MCF 10A (cell line): ENCODE measurements at regions of chr19 and their contacts with region 1.

Region 1: DNA sequence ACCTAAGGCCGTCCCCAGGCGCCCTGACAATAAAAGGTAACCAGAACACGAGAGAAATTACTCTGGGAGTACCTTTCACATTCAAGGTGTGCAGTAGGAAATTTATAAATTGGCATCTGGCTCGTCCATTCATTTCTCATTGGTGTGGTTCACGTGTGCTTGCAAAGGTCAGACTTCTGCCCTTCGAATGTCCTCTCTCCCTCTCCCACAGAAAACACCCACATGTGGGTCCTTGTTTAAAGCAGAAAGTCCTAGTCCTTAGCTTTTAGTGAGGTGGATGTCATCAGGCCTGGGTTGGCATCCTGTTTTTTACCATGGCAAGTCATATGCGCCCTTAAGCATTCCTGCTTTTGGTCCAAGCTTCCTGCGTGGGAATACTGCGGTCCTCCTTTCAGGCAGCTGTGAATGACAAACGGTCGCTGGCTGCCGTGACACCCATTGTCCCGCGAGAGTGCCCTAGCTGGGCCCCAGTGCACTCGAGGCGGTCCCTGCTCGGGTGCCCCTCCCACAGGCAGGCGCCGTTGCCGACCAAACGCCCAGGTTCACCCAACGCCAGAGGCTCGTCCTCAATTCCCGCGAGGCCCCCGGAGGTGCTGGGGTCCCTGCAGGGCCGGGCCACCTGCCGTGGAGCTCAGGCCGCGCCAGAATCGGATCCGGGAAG is at the start of gene NUDT19:
- DNase-seq: peak; percentile 92
- H3K4me3 Mint-ChIP-seq: peak within 1 kb of the TSS; percentile 79
- H3K27ac Mint-ChIP-seq: peak within 1 kb of the TSS; percentile 96
- H3K4me1 Mint-ChIP-seq: peaks cover 37% of the 10 kb centered on the region
- H3K27me3 Mint-ChIP-seq: no peaks in the 10 kb centered on the region
- CTCF ChIP-seq: no peak
- total RNA-seq, gene NUDT19: 29.4 and 33.4 TPM in 2 replicates

Region 2: GRCh38 chr19:32674959-32675719 is 16.3 kb before region 1 on chr19 and contains the start of gene ANKRD27:
- CTCF ChIA-PET with region 1: interaction called, 5 read pairs
- POLR2A ChIA-PET with region 1: interaction called, 24 read pairs
- intact Hi-C with region 1: loop called (anchors 2 kb)
- DNase-seq: peak; percentile 99
- H3K4me3 Mint-ChIP-seq: peak within 1 kb of the TSS; percentile 84
- H3K27ac Mint-ChIP-seq: peak within 1 kb of the TSS; percentile 67
- H3K4me1 Mint-ChIP-seq: peaks cover 11% of the 10 kb centered on the region
- H3K27me3 Mint-ChIP-seq: no peaks in the 10 kb centered on the region
- CTCF ChIP-seq: no peak
- total RNA-seq, gene ANKRD27: 28.4 and 30.1 TPM in 2 replicates

Region 3: DNA sequence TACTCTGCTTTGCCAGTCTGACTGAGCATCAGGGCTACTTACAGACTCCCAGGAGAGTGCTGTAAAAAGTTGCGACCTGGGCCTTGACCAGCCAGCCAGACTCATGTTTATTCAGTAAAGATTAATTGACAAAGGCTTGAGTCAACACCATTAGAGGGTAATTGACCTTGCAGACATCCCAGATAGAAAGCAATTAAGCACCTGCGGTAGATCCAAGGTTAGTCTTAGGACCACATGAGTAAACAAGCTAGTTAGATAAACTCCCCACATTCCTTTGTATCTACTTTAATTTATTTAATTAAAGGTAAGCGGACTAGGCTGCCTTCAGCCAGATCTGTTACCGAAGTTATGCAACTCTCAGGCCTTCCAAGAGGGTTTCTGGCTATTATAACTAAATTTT is 10.7 kb after region 1 on chr19:
- CTCF ChIA-PET with region 1: no interaction called
- POLR2A ChIA-PET with region 1: interaction called, 13 read pairs
- intact Hi-C with region 1: no loop called
- DNase-seq: no peak
- H3K4me3 Mint-ChIP-seq: no peak overlapping the region
- H3K27ac Mint-ChIP-seq: no peak overlapping the region
- H3K4me1 Mint-ChIP-seq: no peaks in the 10 kb centered on the region
- H3K27me3 Mint-ChIP-seq: no peaks in the 10 kb centered on the region
- CTCF ChIP-seq: no peak

Region 4: DNA sequence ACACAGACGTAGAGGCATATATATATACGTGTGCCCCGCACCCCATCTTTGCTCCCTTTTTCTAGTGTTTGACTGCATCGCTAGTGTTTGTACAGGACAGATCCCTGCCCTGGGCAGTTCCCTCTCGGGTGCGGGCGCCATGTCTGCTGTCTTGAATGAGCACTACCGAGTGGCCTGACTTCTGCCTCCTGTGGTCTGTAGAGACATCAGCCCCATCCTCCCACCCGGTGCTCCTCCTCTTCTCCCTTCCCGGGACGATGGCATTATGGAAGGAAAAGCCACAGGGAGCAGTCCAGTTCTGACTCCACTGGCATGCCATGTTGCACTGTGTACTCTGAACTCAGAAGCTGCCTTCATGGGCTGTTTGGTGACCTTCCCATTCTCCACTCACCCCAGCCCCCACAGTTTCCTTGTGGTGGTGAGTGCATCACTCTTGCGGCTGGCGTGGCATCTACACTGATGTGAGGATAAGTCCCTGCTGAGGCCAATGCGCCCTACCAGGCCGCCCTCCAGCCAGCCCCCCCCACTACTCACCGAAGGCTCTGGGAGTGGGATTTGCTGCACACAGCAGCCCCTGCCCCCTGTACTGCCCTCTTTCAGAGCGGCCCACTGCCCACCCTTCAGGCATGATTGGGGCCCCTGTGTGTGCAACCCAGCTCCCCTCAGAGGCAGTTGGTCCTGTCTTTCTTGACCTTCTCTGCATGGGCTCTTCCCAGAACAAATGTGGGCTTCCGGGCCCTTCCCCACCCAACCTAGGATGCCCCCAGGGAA is 53.3 kb after region 1 on chr19:
- CTCF ChIA-PET with region 1: no interaction called
- POLR2A ChIA-PET with region 1: no interaction called
- intact Hi-C with region 1: no loop called
- DNase-seq: no peak
- H3K4me3 Mint-ChIP-seq: no peak overlapping the region
- H3K27ac Mint-ChIP-seq: no peak overlapping the region
- H3K4me1 Mint-ChIP-seq: no peaks in the 10 kb centered on the region
- H3K27me3 Mint-ChIP-seq: no peaks in the 10 kb centered on the region
- CTCF ChIP-seq: no peak

Region 5: DNA sequence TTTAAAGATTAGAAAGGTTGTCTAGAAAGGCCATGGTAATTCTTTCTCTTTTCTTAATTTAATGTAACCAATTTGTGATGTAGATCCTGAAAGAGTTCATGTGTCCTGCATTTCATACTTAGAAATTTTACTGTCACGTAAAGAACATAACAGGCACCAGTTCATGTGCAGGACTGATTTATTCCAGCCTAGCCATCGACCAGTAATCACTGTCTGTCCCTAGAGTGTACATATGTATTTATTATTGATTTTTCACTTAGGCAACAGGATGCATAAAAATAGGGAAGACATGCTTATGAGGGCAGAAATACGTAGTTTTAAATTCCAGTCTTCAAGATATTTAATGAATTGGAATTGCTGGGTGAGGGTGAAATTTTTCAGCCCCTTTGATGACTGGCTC is 65.8 kb after region 1 on chr19:
- CTCF ChIA-PET with region 1: no interaction called
- POLR2A ChIA-PET with region 1: no interaction called
- intact Hi-C with region 1: no loop called
- DNase-seq: no peak
- H3K4me3 Mint-ChIP-seq: no peak overlapping the region
- H3K27ac Mint-ChIP-seq: no peak overlapping the region
- H3K4me1 Mint-ChIP-seq: no peaks in the 10 kb centered on the region
- H3K27me3 Mint-ChIP-seq: no peaks in the 10 kb centered on the region
- CTCF ChIP-seq: no peak

Region 6: GRCh38 chr19:33064458-33064791 is 373.0 kb after region 1 on chr19:
- CTCF ChIA-PET with region 1: no interaction called
- POLR2A ChIA-PET with region 1: no interaction called
- intact Hi-C with region 1: no loop called
- DNase-seq: no peak
- H3K4me3 Mint-ChIP-seq: peak overlapping the region; percentile 70
- H3K27ac Mint-ChIP-seq: no peak overlapping the region
- H3K4me1 Mint-ChIP-seq: no peaks in the 10 kb centered on the region
- H3K27me3 Mint-ChIP-seq: no peaks in the 10 kb centered on the region
- CTCF ChIP-seq: no peak